ENCODE measurements at regions of chrX and their contacts with region 1.

Region 1: GRCh38 chrX:53760095-53760494 is 73.6 kb upstream of the HUWE1 start:
- DNase-seq: no peak

Region 2: DNA sequence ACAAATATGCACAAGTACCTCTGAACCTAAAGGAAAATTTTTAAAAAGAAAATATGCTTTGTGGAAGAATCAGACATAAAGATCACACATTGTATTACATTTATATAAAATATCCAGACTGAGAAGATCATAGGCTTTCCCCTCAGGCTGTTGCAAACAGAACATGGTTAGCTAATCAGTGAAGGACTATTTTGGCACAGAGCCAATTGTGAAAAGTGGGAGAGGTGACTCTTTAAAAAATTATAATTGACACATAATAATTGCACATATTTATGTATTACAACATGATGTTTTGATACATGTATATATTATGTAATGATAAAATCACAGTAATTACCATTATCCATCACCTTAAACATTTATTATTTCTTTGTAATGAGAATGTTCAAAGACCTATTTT is 1819.0 kb after region 1 on chrX:
- intact Hi-C with region 1: loop called in 1 of 2 experiments (anchors 5 kb)
- DNase-seq: no peak

Measured in posterior vena cava (tissue), 2 donors.